Activated T-helper 1 cell treated with anti-CD3 and anti-CD28 coated beads, Interleukin-12 subunit alpha, Interleukin-12 subunit beta, Interleukin-2, Interleukin-4 antibody, amounts not matched to agents 30 ng/mL and 10 ng/mL and 1 ng/mL, durations not matched to agents 14 hours and 24 hours and 36 hours (primary cell): ENCODE measurements at regions of chr12 and their contacts with region 1.

Region 1: GRCh38 chr12:19529951-19530635 is 90.8 kb downstream of the AEBP2 start:
- DNase-seq: no peak
- H3K4me3 Mint-ChIP-seq: no peak overlapping the region
- H3K27ac Mint-ChIP-seq: no peak overlapping the region
- H3K4me1 Mint-ChIP-seq: peaks cover 22% of the 10 kb centered on the region
- H3K27me3 Mint-ChIP-seq: no peaks in the 10 kb centered on the region

Region 2: GRCh38 chr12:19451196-19451595 is 78.9 kb before region 1 on chr12:
- intact Hi-C with region 1: loop called (anchors 5 kb)
- DNase-seq: no peak
- H3K4me3 Mint-ChIP-seq: no peak overlapping the region
- H3K27ac Mint-ChIP-seq: no peak overlapping the region
- H3K4me1 Mint-ChIP-seq: peaks cover 51% of the 10 kb centered on the region
- H3K27me3 Mint-ChIP-seq: no peaks in the 10 kb centered on the region